Naive thymus-derived CD4-positive, alpha-beta T cell (primary cell): ENCODE measurements at regions of chr1 and their contacts with region 1.

Region 1: GRCh38 chr1:7902478-7903085 is 38.1 kb downstream of the TNFRSF9 start:
- DNase-seq: peak; percentile 23 to 59 (median 48)
- ATAC-seq: peak; percentile 83
- H3K4me3 ChIP-seq: peak overlapping the region; percentile 50
- H3K4me3 Mint-ChIP-seq: peak overlapping the region in 9 of 10 donors; percentile 54 to 74 (median 62)
- H3K27ac ChIP-seq: no peak overlapping the region
- H3K27ac Mint-ChIP-seq: peak overlapping the region in 2 of 9 donors; percentile 32 to 55
- H3K4me1 ChIP-seq: peaks cover 0 to 4% of the 10 kb centered on the region in 2 donors
- H3K4me1 Mint-ChIP-seq: peaks cover 0 to 12% (median 4%) of the 10 kb centered on the region in 7 donors
- H3K27me3 ChIP-seq: no peaks in the 10 kb centered on the region
- H3K27me3 Mint-ChIP-seq: peaks cover 0 to 10% (median 0%) of the 10 kb centered on the region in 5 donors

Region 2: DNA sequence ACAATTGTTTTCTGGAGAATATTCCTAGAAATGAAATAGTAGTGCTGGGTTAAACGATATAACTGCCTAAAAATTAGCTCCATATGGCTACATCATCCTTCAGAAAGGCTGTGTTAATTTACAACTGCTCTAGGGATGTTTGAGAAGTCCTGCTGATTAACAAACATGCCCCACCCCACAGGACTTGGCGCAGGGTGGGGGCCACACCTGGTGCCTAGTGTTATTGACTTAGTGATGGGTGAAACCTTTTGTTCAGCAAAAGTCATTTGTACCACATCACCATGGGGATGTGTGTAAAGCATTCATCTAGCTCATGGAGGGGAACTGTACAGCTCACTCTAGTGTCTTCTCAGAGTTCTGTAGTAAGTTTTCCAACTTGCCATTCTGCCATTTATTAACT is 624.5 kb before region 1 on chr1:
- CTCF ChIA-PET with region 1: no interaction called
- POLR2A ChIA-PET with region 1: no interaction called
- intact Hi-C with region 1: no loop called
- DNase-seq: no peak
- ATAC-seq: no peak
- H3K4me3 ChIP-seq: no peak overlapping the region
- H3K4me3 Mint-ChIP-seq: no peak overlapping the region
- H3K27ac ChIP-seq: no peak overlapping the region
- H3K27ac Mint-ChIP-seq: no peak overlapping the region
- H3K4me1 ChIP-seq: no peaks in the 10 kb centered on the region
- H3K4me1 Mint-ChIP-seq: no peaks in the 10 kb centered on the region
- H3K27me3 ChIP-seq: no peaks in the 10 kb centered on the region
- H3K27me3 Mint-ChIP-seq: peaks cover 6 to 31% (median 20%) of the 10 kb centered on the region in 5 donors

Region 3: GRCh38 chr1:7667625-7668218 is 234.9 kb before region 1 on chr1:
- CTCF ChIA-PET with region 1: interaction called, 7 read pairs
- POLR2A ChIA-PET with region 1: no interaction called
- intact Hi-C with region 1: loop called in 1 of 2 experiments (anchors 1 kb)
- DNase-seq: peak; percentile 51 to 85 (median 75)
- ATAC-seq: peak; percentile 86
- H3K4me3 ChIP-seq: no peak overlapping the region
- H3K4me3 Mint-ChIP-seq: no peak overlapping the region
- H3K27ac ChIP-seq: no peak overlapping the region
- H3K27ac Mint-ChIP-seq: no peak overlapping the region
- H3K4me1 ChIP-seq: no peaks in the 10 kb centered on the region
- H3K4me1 Mint-ChIP-seq: peaks cover 0 to 8% (median 3%) of the 10 kb centered on the region in 7 donors
- H3K27me3 ChIP-seq: no peaks in the 10 kb centered on the region
- H3K27me3 Mint-ChIP-seq: peaks cover 0 to 4% (median 0%) of the 10 kb centered on the region in 5 donors

Region 4: GRCh38 chr1:7752512-7753417 is 149.8 kb before region 1 on chr1:
- CTCF ChIA-PET with region 1: no interaction called
- POLR2A ChIA-PET with region 1: no interaction called
- intact Hi-C with region 1: loop called in 1 of 2 experiments (anchors 2 kb)
- DNase-seq: peak in 8 of 9 donors; percentile 24 to 51 (median 42)
- ATAC-seq: peak; percentile 65
- H3K4me3 ChIP-seq: no peak overlapping the region
- H3K4me3 Mint-ChIP-seq: peak overlapping the region in 9 of 10 donors; percentile 12 to 68 (median 55)
- H3K27ac ChIP-seq: no peak overlapping the region
- H3K27ac Mint-ChIP-seq: no peak overlapping the region
- H3K4me1 ChIP-seq: peaks cover 0 to 7% of the 10 kb centered on the region in 2 donors
- H3K4me1 Mint-ChIP-seq: peaks cover 11 to 21% (median 19%) of the 10 kb centered on the region in 7 donors
- H3K27me3 ChIP-seq: no peaks in the 10 kb centered on the region
- H3K27me3 Mint-ChIP-seq: peaks cover 5 to 23% (median 15%) of the 10 kb centered on the region in 5 donors

Region 5: DNA sequence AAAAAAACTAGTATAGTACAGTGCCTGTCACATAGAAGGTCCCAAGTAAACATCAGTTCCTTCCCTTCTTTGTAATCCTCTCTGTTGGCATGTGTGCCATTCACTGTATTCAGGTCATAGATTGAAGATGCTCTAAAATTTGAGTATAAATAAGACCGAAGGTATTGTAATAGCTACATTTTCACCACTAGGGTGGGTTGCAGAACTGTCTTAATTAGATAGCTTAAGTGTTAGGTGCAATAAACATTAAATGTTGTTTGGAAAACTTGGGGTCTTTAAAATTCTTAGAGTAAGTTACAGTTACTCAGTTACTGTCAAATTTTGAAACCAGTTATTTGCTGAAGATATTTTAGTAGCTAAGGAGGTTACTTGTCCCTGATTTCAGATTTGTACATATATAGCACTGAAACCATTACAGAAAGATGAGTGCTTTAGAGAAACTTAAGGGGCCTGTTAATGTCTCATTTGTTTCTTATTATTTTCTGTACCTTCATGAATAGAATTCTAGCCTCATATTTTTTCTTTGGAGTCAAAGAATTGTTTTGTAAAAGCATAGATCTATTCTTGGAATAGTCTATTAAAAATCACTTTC is 94.2 kb before region 1 on chr1:
- CTCF ChIA-PET with region 1: no interaction called
- POLR2A ChIA-PET with region 1: no interaction called
- intact Hi-C with region 1: loop called (anchors 1 to 2 kb)
- DNase-seq: peak in 1 of 9 donors; percentile 13
- ATAC-seq: peak; percentile 54
- H3K4me3 ChIP-seq: no peak overlapping the region
- H3K4me3 Mint-ChIP-seq: no peak overlapping the region
- H3K27ac ChIP-seq: no peak overlapping the region
- H3K27ac Mint-ChIP-seq: peak overlapping the region in 1 of 9 donors; percentile 14
- H3K4me1 ChIP-seq: no peaks in the 10 kb centered on the region
- H3K4me1 Mint-ChIP-seq: no peaks in the 10 kb centered on the region
- H3K27me3 ChIP-seq: no peaks in the 10 kb centered on the region
- H3K27me3 Mint-ChIP-seq: no peaks in the 10 kb centered on the region

Region 6: DNA sequence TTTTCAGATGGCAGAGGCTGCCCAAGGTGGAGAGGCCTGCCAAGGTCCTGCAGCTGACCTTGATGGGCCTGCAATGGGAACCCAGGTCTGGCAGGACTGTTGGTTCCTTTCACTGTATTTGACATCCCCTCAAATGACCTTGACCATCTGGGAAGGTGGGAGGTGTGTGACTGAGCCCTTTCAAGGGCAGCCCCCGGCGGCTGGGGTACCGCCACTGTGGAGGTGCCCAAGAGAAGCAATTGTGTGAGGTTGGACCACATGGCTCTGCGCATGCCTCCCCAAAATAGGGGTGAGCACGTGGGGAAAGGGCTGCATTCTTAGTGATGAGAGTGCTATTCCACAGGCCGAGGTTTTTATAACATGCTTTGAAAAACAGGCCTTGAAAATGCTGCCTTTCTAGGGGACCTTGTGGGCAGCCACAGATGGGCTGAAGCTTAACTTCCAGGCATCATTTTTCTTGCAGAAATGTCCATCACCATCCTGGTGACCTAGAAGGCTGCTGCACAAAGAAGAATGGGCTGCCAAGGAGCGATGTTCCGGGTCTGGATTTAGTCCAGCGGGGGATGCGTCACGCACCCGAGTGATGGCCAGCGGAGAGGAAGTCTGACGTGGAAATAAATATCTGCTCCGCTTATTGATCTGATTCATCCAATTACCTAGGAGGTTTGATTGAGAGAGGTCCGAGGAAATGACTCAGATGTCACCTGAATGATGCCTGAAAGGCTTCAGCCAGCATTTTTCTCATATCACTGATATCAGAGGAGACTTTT is 33.3 kb before region 1 on chr1:
- CTCF ChIA-PET with region 1: no interaction called
- POLR2A ChIA-PET with region 1: no interaction called
- intact Hi-C with region 1: no loop called
- DNase-seq: no peak
- ATAC-seq: no peak
- H3K4me3 ChIP-seq: no peak overlapping the region
- H3K4me3 Mint-ChIP-seq: no peak overlapping the region
- H3K27ac ChIP-seq: no peak overlapping the region
- H3K27ac Mint-ChIP-seq: no peak overlapping the region
- H3K4me1 ChIP-seq: no peaks in the 10 kb centered on the region
- H3K4me1 Mint-ChIP-seq: peaks cover 0 to 3% (median 0%) of the 10 kb centered on the region in 7 donors
- H3K27me3 ChIP-seq: no peaks in the 10 kb centered on the region
- H3K27me3 Mint-ChIP-seq: peaks cover 0 to 3% (median 0%) of the 10 kb centered on the region in 5 donors